ENCODE measurements at regions of chr18 and their contacts with region 1.

Region 1: GRCh38 chr18:8882632-8883408 is 177.5 kb downstream of the MTCL1 start:
- DNase-seq: peak; percentile 60 to 82 (median 62)
- ATAC-seq: peak; percentile 94
- H3K4me3 ChIP-seq: no peak overlapping the region
- H3K27ac ChIP-seq: peak overlapping the region; percentile 79
- H3K4me1 ChIP-seq: peaks cover 9 to 12% of the 10 kb centered on the region in 2 experiments; a peak in 4 of 5 replicates
- H3K27me3 ChIP-seq: no peaks in the 10 kb centered on the region
- CTCF ChIP-seq: peak; percentile 76 to 80 (median 79)
- EP300 ChIP-seq: peak; percentile 40; the same call in 1 of the 2 replicates
- POLR2A ChIP-seq: no peak
- RAD21 ChIP-seq: peak; percentile 86 to 95

Region 2: DNA sequence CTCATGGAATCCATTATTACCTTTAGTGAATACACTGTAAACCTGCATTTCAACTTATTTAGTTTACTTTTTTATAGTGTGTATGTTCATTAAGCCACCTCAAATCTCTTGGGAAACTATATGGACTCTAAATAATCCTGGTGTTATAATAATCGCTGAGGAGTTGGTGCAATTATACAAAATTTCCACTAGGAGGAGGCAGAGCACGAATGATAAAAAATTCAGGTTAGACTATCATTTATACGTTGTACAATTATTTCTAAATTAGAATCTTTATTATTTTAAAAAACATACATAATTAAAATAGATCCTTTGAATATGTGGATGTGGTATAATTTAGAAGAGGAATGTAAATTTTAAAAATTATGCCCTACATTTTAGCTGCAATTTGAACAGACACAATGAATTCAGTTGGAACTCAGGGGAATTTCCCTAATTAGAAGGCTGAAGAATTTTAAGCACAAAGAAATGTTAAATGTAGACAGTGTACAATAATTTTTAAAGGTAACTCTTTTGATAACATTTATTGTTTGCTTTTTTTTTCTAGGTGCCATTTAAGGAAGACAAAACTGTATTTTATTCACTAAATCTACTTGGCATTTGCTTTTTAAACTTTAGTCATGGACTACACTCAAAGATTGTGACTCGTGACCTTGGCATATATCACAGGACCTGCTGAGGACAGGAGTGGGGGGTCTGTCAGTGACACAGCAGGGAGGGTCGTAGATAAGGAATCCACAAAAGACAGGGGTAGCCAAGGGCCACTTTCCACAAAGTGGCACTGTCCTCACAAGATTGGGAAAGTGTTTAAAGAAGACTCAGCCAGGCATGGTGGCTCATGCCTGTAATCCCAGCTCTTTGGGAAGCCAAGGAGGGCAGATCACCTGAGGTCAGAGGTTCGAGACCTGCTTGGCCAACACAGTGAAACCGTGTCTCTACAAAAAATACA is 228.0 kb before region 1 on chr18:
- CTCF ChIA-PET with region 1: no interaction called
- POLR2A ChIA-PET with region 1: no interaction called
- in situ Hi-C with region 1: no loop called
- intact Hi-C with region 1: loop called (anchors 10 kb)
- DNase-seq: peak; percentile 33 to 56 (median 50)
- ATAC-seq: peak; percentile 60
- H3K4me3 ChIP-seq: no peak overlapping the region
- H3K27ac ChIP-seq: no peak overlapping the region
- H3K4me1 ChIP-seq: peaks cover 7 to 10% of the 10 kb centered on the region in 2 experiments; a peak in 3 of 5 replicates
- H3K27me3 ChIP-seq: no peaks in the 10 kb centered on the region; a peak in 1 of 5 replicates
- CTCF ChIP-seq: peak; percentile 54 to 92 (median 64); a peak in 4 of 6 replicates
- EP300 ChIP-seq: no peak
- POLR2A ChIP-seq: no peak
- RAD21 ChIP-seq: peak; percentile 91 to 93

Region 3: DNA sequence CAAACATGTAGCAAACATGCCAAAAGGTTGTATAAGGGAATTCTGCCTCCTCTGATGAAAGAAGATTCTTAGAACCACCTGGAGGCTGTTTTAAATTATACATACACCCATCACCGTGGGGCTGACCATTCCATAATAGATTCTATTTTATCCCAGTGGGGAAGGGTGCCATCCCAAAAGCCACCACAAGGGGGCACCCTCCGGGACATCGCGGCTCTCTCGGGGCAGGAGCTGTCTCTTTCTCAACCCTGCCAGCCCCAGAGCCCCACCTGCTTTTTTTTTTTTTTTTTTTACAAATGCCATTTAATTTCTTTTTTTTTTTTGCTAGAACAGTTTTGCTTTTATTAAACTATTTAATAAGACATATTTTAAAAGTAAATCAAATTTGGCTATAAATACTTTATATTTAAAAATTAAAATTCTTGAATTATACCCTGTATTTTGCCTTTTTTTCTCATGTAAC is 186.0 kb before region 1 on chr18:
- CTCF ChIA-PET with region 1: no interaction called
- POLR2A ChIA-PET with region 1: no interaction called
- in situ Hi-C with region 1: no loop called
- intact Hi-C with region 1: loop called (anchors 5 kb)
- DNase-seq: peak; percentile 74 to 90 (median 86)
- ATAC-seq: peak; percentile 95
- H3K4me3 ChIP-seq: no peak overlapping the region
- H3K27ac ChIP-seq: no peak overlapping the region
- H3K4me1 ChIP-seq: peaks cover 0 to 2% of the 10 kb centered on the region in 2 experiments; a peak in 1 of 5 replicates
- H3K27me3 ChIP-seq: no peaks in the 10 kb centered on the region
- CTCF ChIP-seq: peak; percentile 88 to 94 (median 91)
- EP300 ChIP-seq: no peak
- POLR2A ChIP-seq: no peak
- RAD21 ChIP-seq: peak; percentile 76 to 80

Region 4: GRCh38 chr18:8844721-8845148 is 38.1 kb before region 1 on chr18:
- CTCF ChIA-PET with region 1: no interaction called
- POLR2A ChIA-PET with region 1: no interaction called
- in situ Hi-C with region 1: no loop called
- intact Hi-C with region 1: no loop called
- DNase-seq: no peak
- ATAC-seq: no peak
- H3K4me3 ChIP-seq: no peak overlapping the region
- H3K27ac ChIP-seq: no peak overlapping the region
- H3K4me1 ChIP-seq: no peaks in the 10 kb centered on the region
- H3K27me3 ChIP-seq: peaks cover 37 to 60% of the 10 kb centered on the region in 2 experiments
- CTCF ChIP-seq: no peak
- EP300 ChIP-seq: no peak
- POLR2A ChIP-seq: no peak
- RAD21 ChIP-seq: no peak

Region 5: DNA sequence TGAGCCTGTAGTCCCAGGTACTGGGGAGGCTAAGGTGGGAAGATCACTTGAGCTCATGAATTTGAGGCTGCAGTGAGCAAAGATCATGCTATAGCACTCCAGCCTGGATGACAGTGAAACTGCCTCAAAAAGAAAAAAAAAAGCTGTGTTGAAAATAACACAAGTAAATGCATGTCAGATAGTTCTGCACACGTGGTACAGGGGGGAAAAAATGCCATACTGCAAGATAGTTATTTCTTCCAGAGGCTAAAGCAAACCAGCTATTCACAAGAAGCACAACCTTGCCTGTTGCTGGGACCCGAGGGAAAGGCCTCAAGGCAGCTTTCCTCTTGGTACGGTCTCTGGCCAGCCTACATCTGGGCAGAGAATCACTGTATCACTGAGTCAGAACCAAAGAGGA is 39.8 kb after region 1 on chr18:
- CTCF ChIA-PET with region 1: no interaction called
- POLR2A ChIA-PET with region 1: no interaction called
- in situ Hi-C with region 1: no loop called
- intact Hi-C with region 1: loop called (anchors 5 kb)
- DNase-seq: no peak
- ATAC-seq: no peak
- H3K4me3 ChIP-seq: no peak overlapping the region
- H3K27ac ChIP-seq: no peak overlapping the region
- H3K4me1 ChIP-seq: peaks cover 0 to 18% of the 10 kb centered on the region in 2 experiments; a peak in 3 of 5 replicates
- H3K27me3 ChIP-seq: no peaks in the 10 kb centered on the region
- CTCF ChIP-seq: no peak
- EP300 ChIP-seq: no peak
- POLR2A ChIP-seq: no peak
- RAD21 ChIP-seq: no peak

Region 6: DNA sequence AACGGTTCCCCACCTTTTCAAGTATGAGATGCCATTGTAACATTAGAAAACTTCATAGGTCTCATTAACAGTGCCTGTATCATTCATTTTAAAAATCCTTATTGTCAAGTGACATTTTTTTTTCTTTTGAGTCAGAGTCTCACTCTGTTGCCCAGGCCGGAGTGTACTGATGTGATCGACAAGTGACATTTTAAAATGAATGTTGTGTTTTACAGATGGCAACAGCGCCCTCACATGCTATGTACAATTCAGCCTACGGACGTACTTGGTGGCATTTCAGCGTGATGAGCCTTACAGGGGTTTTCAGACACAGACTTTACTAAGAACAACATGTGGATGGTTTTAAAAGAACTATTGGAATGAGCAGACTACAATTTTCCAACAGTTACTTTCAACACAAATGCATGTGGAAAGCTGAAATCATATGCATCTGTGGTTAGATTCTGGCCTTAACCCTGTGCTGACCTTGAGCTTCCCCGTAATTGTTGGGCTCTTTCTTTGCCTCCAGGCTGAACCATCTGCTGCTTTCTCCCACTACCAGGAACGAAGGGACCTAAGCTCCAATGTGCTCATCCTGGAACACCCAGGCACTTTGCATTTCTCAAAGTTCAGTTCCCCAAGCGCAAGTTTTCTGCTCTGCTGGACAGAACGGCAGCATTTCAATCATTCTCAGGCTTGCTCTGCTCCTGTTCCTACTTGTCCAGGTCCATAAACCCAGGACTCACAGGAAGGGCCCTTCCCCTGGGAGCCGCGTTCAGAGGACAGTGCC is 99.8 kb after region 1 on chr18:
- CTCF ChIA-PET with region 1: interaction called, 3 read pairs
- POLR2A ChIA-PET with region 1: no interaction called
- in situ Hi-C with region 1: no loop called
- intact Hi-C with region 1: loop called (anchors 1 kb)
- DNase-seq: peak in 3 of 4 experiments; percentile 40 to 85 (median 59)
- ATAC-seq: peak; percentile 94
- H3K4me3 ChIP-seq: no peak overlapping the region
- H3K27ac ChIP-seq: no peak overlapping the region
- H3K4me1 ChIP-seq: peaks cover 3 to 12% of the 10 kb centered on the region in 2 experiments; a peak in 3 of 5 replicates
- H3K27me3 ChIP-seq: no peaks in the 10 kb centered on the region
- CTCF ChIP-seq: peak; percentile 74 to 90 (median 81)
- EP300 ChIP-seq: peak; percentile 45; the same call in 1 of the 2 replicates
- POLR2A ChIP-seq: no peak
- RAD21 ChIP-seq: peak; percentile 93 to 98

Region 7: DNA sequence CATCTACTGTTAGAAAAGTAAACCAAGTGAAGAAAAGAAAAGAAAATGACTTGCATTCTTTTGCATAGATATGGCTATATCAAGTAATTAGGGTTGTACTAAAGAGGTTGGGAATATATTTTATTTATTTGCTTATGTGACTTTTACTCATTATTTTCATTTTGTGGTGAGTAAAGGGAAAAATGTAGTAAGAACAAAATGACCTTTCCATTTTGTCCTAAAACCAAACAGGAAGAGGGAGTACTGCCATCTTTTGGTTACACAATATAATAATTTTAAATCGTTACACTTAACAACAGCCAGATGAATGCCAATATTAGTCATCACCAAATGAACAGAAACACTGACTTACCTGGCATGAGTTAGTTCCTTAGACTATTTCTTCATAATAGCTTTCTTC is 172.4 kb after region 1 on chr18:
- CTCF ChIA-PET with region 1: no interaction called
- POLR2A ChIA-PET with region 1: interaction called, 3 read pairs
- in situ Hi-C with region 1: no loop called
- intact Hi-C with region 1: loop called (anchors 5 kb)
- DNase-seq: peak in 2 of 4 experiments; percentile 41 to 55
- ATAC-seq: peak; percentile 79
- H3K4me3 ChIP-seq: no peak overlapping the region
- H3K27ac ChIP-seq: peak overlapping the region; percentile 49
- H3K4me1 ChIP-seq: peaks cover 0 to 12% of the 10 kb centered on the region in 2 experiments; a peak in 3 of 5 replicates
- H3K27me3 ChIP-seq: no peaks in the 10 kb centered on the region
- CTCF ChIP-seq: peak in 2 of 3 experiments; percentile 39 to 75; a peak in 3 of 6 replicates
- EP300 ChIP-seq: 0 out of 2 replicates have a peak, but pooled peaks have one; percentile 6
- POLR2A ChIP-seq: no peak
- RAD21 ChIP-seq: peak; percentile 84 to 90

Region 8: GRCh38 chr18:9147440-9148202 is 264.8 kb after region 1 on chr18:
- CTCF ChIA-PET with region 1: interaction called, 5 read pairs
- POLR2A ChIA-PET with region 1: interaction called, 3 read pairs
- in situ Hi-C with region 1: no loop called
- intact Hi-C with region 1: loop called (anchors 2 kb)
- DNase-seq: peak in 2 of 4 experiments; percentile 62 to 81
- ATAC-seq: peak; percentile 88
- H3K4me3 ChIP-seq: no peak overlapping the region
- H3K27ac ChIP-seq: peak overlapping the region; percentile 22; the same call in 2 of the 3 replicates
- H3K4me1 ChIP-seq: peaks cover 3 to 13% of the 10 kb centered on the region in 2 experiments; a peak in 4 of 5 replicates
- H3K27me3 ChIP-seq: no peaks in the 10 kb centered on the region
- CTCF ChIP-seq: peak; percentile 79 to 92 (median 81)
- EP300 ChIP-seq: no peak; the same call in 1 of the 2 replicates
- POLR2A ChIP-seq: no peak
- RAD21 ChIP-seq: peak; percentile 96